CD8-positive, alpha-beta T cell (primary cell): ENCODE measurements at regions of chr18 and their contacts with region 1.

Region 1: DNA sequence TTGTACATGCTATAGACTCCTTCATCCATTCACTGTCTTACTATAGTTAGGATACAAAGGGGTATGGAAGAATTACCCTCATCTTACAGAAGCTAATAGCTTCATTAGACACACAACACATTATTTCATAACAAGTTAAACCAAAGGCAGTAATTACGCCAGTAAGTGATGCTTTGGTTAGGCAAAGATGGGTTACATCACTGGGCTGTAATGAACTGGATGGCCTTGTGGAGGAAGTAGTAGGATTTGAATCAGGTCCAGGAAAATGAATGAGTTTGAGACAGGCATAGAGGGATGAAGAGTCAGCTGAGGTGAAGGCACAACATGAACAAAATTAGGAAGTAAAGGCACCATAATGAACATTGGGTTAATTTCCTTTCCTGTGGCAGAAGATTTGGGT is 80.1 kb downstream of the SOCS6 start:
- DNase-seq: no peak
- ATAC-seq: no peak
- H3K4me3 ChIP-seq: no peak overlapping the region
- H3K4me3 Mint-ChIP-seq: no peak overlapping the region
- H3K27ac ChIP-seq: no peak overlapping the region
- H3K27ac Mint-ChIP-seq: no peak overlapping the region
- H3K4me1 ChIP-seq: no peaks in the 10 kb centered on the region
- H3K4me1 Mint-ChIP-seq: no peaks in the 10 kb centered on the region
- H3K27me3 ChIP-seq: no peaks in the 10 kb centered on the region
- H3K27me3 Mint-ChIP-seq: peaks cover 14% of the 10 kb centered on the region
- CTCF ChIP-seq: no peak

Region 2: GRCh38 chr18:69557282-69557681 is 811.6 kb before region 1 on chr18:
- CTCF ChIA-PET with region 1: no interaction called
- POLR2A ChIA-PET with region 1: no interaction called
- intact Hi-C with region 1: loop called in 1 of 2 experiments (anchors 5 kb)
- DNase-seq: no peak
- ATAC-seq: no peak
- H3K4me3 ChIP-seq: no peak overlapping the region
- H3K4me3 Mint-ChIP-seq: no peak overlapping the region
- H3K27ac ChIP-seq: no peak overlapping the region
- H3K27ac Mint-ChIP-seq: no peak overlapping the region
- H3K4me1 ChIP-seq: no peaks in the 10 kb centered on the region
- H3K4me1 Mint-ChIP-seq: no peaks in the 10 kb centered on the region
- H3K27me3 ChIP-seq: no peaks in the 10 kb centered on the region
- H3K27me3 Mint-ChIP-seq: peaks cover 7% of the 10 kb centered on the region
- CTCF ChIP-seq: no peak